PC-9 (cell line): ENCODE measurements at regions of chr1 and their contacts with region 1.

Region 1: DNA sequence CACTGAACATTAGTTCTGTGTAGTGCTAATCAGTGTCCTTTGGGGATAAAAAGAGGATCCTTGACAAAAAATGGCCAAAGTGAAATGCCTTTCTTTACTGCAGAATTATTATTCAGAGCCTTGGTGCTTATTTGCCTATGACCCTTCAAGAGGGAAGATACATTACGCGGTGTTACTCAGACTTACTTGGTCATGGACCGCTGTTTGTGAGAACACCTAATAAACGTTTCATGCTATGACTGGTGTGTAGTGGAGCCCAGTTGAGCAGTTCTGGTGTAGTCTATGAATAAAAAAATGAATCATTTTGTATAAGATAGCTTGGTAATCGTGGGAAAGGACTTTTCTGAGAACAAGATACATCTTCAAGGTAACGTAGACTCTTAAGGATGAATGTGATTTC is 8.3 kb downstream of the NFYC start:
- DNase-seq: no peak
- H3K4me3 ChIP-seq: no peak overlapping the region
- H3K27ac ChIP-seq: no peak overlapping the region
- H3K4me1 ChIP-seq: peaks cover 7% of the 10 kb centered on the region; the same call in 1 of the 2 replicates
- H3K27me3 ChIP-seq: no peaks in the 10 kb centered on the region
- CTCF ChIP-seq: no peak

Region 2: DNA sequence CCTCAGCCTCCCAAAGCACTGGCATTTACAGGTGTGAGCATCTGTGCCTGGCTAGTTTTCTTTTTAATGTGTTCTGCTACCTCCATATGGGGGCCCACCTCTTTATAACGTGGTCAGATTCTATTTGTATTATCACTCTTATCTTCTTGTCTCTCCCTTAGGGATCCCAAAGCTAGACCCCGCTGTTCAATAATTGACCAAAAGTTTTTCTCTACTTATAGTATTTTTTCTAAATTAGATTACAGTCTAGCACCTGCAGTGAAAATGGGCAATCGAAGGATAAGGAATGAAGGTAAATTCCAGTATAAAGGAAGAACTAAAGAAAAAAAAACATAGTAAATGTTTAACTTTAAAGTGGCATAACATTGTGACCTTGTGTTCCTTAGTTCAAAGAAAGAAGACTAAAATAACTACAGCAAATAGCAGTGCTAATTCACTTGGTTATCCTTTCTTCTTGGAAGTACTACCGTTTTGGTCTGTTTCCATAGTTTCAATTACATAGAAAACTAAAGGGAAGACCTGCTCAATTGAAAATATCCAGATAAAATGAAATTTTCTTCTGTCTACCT is 15.8 kb after region 1 on chr1:
- CTCF ChIA-PET with region 1: interaction called, 27 read pairs
- POLR2A ChIA-PET with region 1: no interaction called
- intact Hi-C with region 1: no loop called
- DNase-seq: no peak
- H3K4me3 ChIP-seq: no peak overlapping the region
- H3K27ac ChIP-seq: no peak overlapping the region
- H3K4me1 ChIP-seq: peaks cover 22% of the 10 kb centered on the region
- H3K27me3 ChIP-seq: no peaks in the 10 kb centered on the region
- CTCF ChIP-seq: no peak

Region 3: DNA sequence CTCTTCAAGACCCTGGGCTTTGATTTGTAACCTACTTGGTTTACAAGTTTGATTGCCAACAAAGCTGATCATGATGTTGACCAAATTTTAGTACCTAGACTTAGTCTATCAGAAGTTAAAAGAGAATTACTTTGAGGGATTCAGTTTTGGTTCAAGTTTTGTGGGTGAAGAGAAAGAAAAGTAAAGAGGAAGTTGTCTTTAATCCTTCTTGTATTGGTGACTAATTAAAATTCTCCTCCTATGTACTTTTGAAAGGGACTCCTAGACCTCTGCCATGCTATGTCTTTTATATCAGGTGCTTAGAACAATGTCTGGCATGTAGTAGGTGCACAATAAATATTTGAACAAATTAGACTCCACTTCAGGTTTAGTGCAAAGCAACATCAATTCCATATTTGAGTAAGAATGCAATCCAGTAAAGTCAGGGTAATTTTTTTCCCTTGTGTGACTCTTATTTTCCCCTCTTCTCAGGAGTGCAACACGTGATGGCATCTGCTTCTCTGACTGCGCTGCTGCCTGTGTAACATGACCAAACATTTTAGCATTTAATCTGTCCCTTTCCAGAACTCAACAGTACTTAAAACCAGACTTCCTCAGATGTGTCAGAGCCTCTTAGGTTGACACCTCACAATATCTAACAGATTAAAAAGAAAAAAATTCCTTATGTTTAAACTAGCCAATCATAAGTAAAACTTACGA is 42.7 kb after region 1 on chr1:
- CTCF ChIA-PET with region 1: no interaction called
- POLR2A ChIA-PET with region 1: interaction called, 30 read pairs
- intact Hi-C with region 1: no loop called
- DNase-seq: no peak
- H3K4me3 ChIP-seq: no peak overlapping the region
- H3K27ac ChIP-seq: no peak overlapping the region
- H3K4me1 ChIP-seq: no peaks in the 10 kb centered on the region
- H3K27me3 ChIP-seq: no peaks in the 10 kb centered on the region
- CTCF ChIP-seq: no peak

Region 4: DNA sequence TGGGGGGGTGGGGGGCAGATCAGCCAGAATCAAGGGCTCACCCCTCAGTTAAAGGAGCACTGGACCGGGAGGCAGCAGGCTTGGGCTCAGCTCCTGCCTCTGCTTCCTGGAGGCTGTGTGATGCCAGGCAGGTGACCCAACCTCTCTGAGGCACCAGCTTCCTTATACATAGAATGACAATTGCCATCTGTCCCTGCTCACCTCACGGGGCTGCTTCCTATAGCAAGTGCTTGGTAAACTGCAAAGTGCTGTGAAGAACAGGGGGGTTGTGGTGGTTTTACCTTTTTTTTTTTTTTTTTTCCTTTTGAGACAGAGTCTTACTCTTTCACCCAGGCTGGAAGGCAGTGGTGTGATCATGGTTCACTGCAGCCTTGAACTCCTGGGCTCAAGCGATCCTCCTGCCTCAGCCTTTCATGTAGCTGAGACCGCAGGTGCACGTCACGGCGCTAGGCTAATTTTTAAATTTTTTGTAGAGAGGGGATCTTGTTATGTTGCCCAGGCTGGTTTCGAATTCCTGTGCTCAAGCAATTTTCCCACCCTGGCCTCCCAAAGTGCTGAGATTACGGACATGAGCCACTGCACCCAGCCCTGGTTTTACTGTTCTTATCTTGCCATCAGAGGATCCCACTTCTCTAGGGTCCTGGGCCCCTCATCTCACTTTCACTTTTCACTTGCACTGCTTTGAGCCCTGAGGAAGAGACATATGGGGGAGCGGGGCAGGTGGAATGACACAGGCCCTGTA is 95.4 kb after region 1 on chr1:
- CTCF ChIA-PET with region 1: no interaction called
- POLR2A ChIA-PET with region 1: interaction called, 10 read pairs
- intact Hi-C with region 1: no loop called
- DNase-seq: no peak
- H3K4me3 ChIP-seq: no peak overlapping the region
- H3K27ac ChIP-seq: no peak overlapping the region
- H3K4me1 ChIP-seq: no peaks in the 10 kb centered on the region
- H3K27me3 ChIP-seq: no peaks in the 10 kb centered on the region
- CTCF ChIP-seq: no peak